ENCODE measurements at regions of chr19 and their contacts with region 1.

Region 1: GRCh38 chr19:41872775-41873647 is 4.1 kb upstream of the CD79A start:
- DNase-seq: peak in 2 of 3 donors; percentile 64 to 67
- H3K4me3 ChIP-seq: peak overlapping the region in 1 of 7 experiments; percentile 36
- H3K27ac ChIP-seq: peak overlapping the region in 1 of 2 experiments; percentile 1
- H3K4me1 ChIP-seq: peaks cover 18 to 91% (median 80%) of the 10 kb centered on the region in 4 experiments
- H3K27me3 ChIP-seq: no peaks in the 10 kb centered on the region

Region 2: GRCh38 chr19:41859618-41860418 is 13.2 kb before region 1 on chr19 and contains the start of gene RPS19:
- CTCF ChIA-PET with region 1: interaction called, 48 read pairs
- POLR2A ChIA-PET with region 1: interaction called, 8 read pairs
- DNase-seq: peak; percentile 97 to 98 (median 98)
- H3K4me3 ChIP-seq: peak within 1 kb of the TSS; percentile 76 to 98 (median 84)
- H3K27ac ChIP-seq: peak within 1 kb of the TSS; percentile 90 to 95
- H3K4me1 ChIP-seq: peaks cover 12 to 52% (median 46%) of the 10 kb centered on the region in 4 experiments
- H3K27me3 ChIP-seq: no peaks in the 10 kb centered on the region

Region 3: GRCh38 chr19:41912899-41913537 is 40.0 kb after region 1 on chr19:
- CTCF ChIA-PET with region 1: no interaction called
- POLR2A ChIA-PET with region 1: no interaction called
- DNase-seq: no peak
- H3K4me3 ChIP-seq: no peak overlapping the region
- H3K27ac ChIP-seq: no peak overlapping the region
- H3K4me1 ChIP-seq: peaks cover 0 to 17% (median 5%) of the 10 kb centered on the region in 4 experiments
- H3K27me3 ChIP-seq: peaks cover 0 to 75% (median 33%) of the 10 kb centered on the region in 5 experiments

Region 4: GRCh38 chr19:41930926-41931592 is 58.0 kb after region 1 on chr19:
- CTCF ChIA-PET with region 1: interaction called, 11 read pairs
- POLR2A ChIA-PET with region 1: no interaction called
- DNase-seq: peak in 1 of 3 donors; percentile 49
- H3K4me3 ChIP-seq: no peak overlapping the region
- H3K27ac ChIP-seq: no peak overlapping the region
- H3K4me1 ChIP-seq: peaks cover 0 to 35% (median 28%) of the 10 kb centered on the region in 4 experiments
- H3K27me3 ChIP-seq: peaks cover 0 to 60% (median 32%) of the 10 kb centered on the region in 5 experiments

Region 5: DNA sequence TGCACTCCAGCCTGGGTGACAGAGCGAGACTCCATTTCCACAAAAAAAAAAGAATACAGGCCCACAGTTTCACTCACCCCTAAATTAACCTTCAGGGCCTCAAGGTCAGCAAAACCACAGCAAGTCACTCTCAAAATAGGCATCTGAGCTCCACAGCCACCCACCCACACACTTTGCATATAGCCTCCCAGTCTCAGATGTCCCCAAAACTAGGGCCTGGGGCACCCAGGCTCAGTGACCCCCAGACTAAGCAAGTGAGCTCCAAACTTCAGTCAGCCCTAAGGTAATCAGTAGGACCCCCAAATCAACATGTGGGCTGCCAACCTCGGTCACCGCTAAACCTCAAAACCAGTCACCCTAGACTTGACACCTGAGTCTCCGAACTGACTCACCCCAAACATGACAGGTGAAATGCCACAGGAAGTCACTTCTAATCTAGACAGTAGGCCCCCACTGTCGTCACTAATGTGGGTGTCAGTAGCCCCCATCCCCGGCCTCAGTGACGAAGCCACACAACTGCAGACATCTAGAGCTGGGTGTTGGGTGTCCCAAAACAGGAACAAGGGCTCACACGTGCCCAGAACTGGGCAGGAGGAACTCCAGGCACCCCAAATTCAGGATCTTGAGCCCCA is 72.2 kb after region 1 on chr19:
- CTCF ChIA-PET with region 1: interaction called, 37 read pairs
- POLR2A ChIA-PET with region 1: no interaction called
- DNase-seq: peak; percentile 61 to 86 (median 74)
- H3K4me3 ChIP-seq: no peak overlapping the region
- H3K27ac ChIP-seq: no peak overlapping the region
- H3K4me1 ChIP-seq: peaks cover 0 to 15% (median 13%) of the 10 kb centered on the region in 4 experiments
- H3K27me3 ChIP-seq: no peaks in the 10 kb centered on the region

Region 6: DNA sequence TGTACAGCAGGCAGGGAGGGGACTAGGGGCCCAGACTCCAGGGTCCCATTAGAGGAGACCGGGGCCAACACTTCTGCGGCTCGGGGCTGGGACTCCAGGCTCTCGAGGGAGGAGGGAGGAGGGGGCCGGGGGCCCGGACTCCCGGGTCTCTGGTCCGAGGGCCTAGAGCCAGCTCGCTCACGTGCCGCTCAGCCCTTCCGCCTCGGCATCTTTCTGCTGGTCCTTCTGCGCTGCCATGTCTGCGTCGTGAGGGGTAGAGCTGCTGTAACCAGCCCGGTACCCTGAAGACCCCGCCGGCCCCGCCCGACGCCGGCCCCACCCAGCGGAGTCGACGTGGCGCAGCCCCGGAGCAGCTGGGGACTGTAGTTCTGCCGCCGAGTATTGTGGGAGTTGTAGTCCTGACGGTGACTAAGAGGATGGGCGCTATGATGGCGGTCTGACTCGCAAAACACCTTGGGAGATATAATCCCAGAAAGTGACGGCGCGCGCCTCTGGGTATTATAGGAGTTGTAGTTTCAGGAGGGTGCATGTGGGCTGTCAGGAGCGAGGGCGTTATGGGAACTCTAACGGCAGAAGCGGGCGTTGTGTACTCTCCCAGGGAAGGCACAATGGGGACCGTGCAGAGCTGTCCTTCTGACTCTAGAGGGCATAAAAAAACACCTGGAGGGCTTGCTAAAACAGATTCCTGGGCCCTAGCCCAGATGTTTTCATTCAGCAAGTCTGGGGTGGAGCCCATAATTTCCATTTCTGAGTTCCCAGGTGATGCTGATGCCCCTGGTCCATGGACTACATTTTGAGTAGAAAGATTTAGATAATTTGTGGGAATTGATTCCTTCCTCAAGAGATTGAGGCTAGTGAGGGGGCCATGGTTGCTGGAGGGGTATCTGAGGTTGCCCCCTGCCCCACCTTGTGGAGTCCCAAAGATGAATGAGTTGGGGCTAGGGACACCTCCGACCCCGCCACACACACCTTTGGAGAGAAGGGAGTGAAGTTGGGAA is 86.3 kb after region 1 on chr19 and contains the start of gene RABAC1:
- CTCF ChIA-PET with region 1: interaction called, 15 read pairs
- POLR2A ChIA-PET with region 1: interaction called, 3 read pairs
- DNase-seq: peak; percentile 88 to 93 (median 91)
- H3K4me3 ChIP-seq: peak within 1 kb of the TSS; percentile 44 to 92 (median 81)
- H3K27ac ChIP-seq: peak within 1 kb of the TSS in 1 of 2 experiments; percentile 78
- H3K4me1 ChIP-seq: peaks cover 0 to 35% (median 15%) of the 10 kb centered on the region in 4 experiments
- H3K27me3 ChIP-seq: no peaks in the 10 kb centered on the region